Cardiac septum (tissue), 1 donor: ENCODE measurements at regions of chr1 and their contacts with region 1.

Region 1: GRCh38 chr1:223683586-223684487 is 18.3 kb upstream of the CAPN8 start:
- DNase-seq: no peak

Region 2: GRCh38 chr1:222736972-222737371 is 946.9 kb before region 1 on chr1 and contains the start of gene FAM177B:
- intact Hi-C with region 1: loop called (anchors 5 kb)
- DNase-seq: no peak
- total RNA-seq, gene FAM177B: not detected

Region 3: GRCh38 chr1:223652436-223652941 is 31.3 kb before region 1 on chr1:
- intact Hi-C with region 1: no loop called
- DNase-seq: no peak

Region 4: GRCh38 chr1:223738465-223739365 is 54.9 kb after region 1 on chr1:
- intact Hi-C with region 1: no loop called
- DNase-seq: no peak